ENCODE measurements at regions of chr12 and their contacts with region 1.

Region 1: DNA sequence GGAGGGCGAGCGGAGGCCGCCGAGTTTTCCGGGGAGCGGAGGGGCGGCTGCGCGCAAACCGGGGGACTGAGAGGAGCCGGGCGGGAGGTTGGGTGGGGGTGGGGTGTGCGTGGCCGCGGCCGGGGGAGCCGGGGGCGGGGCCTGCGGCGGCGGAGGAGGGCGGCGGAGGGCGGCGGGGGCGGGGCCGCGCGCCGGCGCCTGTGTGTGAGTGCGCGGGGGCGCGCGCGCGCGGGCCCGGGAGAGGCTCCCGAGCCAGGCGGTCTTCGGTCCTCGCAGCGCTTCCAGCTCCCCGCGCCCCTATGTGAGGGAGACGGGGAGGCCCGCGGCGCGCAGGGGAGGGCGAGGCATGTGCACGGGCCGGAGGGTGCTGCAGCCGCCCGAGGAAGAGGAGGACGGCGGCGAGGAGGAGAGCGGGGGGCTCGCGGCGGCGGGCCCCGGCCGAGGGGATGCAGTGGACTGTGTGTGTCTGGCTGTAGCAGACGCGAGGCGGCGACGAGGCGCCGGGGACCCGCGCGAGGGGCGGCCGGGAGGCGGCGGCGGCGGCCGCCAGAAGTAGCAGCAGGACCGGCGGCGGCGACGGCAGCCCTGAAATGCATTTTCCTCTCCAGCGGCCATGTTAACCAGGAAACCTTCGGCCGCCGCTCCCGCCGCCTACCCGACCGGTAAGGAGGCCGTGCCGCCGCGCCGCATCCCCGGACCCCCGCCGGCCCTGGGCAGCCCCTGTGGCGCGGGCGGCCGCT is at the start of gene DYRK2:
- DNase-seq: peak; percentile 88
- H3K4me3 Mint-ChIP-seq: peak within 1 kb of the TSS; percentile 84
- H3K27ac Mint-ChIP-seq: peak within 1 kb of the TSS; percentile 93
- H3K4me1 Mint-ChIP-seq: peaks cover 30% of the 10 kb centered on the region
- H3K27me3 Mint-ChIP-seq: no peaks in the 10 kb centered on the region
- CTCF ChIP-seq: no peak
- total RNA-seq, gene DYRK2: 62.3 and 74.6 TPM in 2 replicates

Region 2: GRCh38 chr12:67515679-67516340 is 132.9 kb before region 1 on chr12:
- CTCF ChIA-PET with region 1: interaction called, 3 read pairs
- intact Hi-C with region 1: loop called (anchors 5 kb)
- DNase-seq: peak; percentile 64
- H3K4me3 Mint-ChIP-seq: no peak overlapping the region
- H3K27ac Mint-ChIP-seq: peak overlapping the region; percentile 64
- H3K4me1 Mint-ChIP-seq: peaks cover 53% of the 10 kb centered on the region
- H3K27me3 Mint-ChIP-seq: no peaks in the 10 kb centered on the region
- CTCF ChIP-seq: no peak

Region 3: DNA sequence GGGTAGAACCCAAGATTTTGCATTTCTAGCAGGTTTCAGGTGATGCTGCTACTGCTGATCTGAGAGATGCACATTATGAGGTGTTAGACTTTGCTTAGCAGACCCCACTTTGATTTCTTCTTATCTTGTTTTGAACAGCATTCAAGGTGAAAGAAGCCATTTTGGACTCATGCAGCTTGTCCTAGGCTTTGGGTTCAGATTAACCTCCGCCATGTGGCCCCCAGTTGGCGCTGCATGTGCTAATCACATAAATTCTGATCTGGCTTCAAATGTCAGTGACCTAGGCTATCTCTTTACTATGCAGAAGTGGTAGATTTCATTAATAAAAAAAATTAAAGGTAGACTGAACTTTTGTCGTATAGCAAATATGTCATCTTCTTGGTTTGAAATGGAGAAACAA is 89.9 kb before region 1 on chr12:
- CTCF ChIA-PET with region 1: no interaction called
- intact Hi-C with region 1: loop called (anchors 5 kb)
- DNase-seq: no peak
- H3K4me3 Mint-ChIP-seq: no peak overlapping the region
- H3K27ac Mint-ChIP-seq: no peak overlapping the region
- H3K4me1 Mint-ChIP-seq: peaks cover 24% of the 10 kb centered on the region
- H3K27me3 Mint-ChIP-seq: no peaks in the 10 kb centered on the region
- CTCF ChIP-seq: no peak

Region 4: DNA sequence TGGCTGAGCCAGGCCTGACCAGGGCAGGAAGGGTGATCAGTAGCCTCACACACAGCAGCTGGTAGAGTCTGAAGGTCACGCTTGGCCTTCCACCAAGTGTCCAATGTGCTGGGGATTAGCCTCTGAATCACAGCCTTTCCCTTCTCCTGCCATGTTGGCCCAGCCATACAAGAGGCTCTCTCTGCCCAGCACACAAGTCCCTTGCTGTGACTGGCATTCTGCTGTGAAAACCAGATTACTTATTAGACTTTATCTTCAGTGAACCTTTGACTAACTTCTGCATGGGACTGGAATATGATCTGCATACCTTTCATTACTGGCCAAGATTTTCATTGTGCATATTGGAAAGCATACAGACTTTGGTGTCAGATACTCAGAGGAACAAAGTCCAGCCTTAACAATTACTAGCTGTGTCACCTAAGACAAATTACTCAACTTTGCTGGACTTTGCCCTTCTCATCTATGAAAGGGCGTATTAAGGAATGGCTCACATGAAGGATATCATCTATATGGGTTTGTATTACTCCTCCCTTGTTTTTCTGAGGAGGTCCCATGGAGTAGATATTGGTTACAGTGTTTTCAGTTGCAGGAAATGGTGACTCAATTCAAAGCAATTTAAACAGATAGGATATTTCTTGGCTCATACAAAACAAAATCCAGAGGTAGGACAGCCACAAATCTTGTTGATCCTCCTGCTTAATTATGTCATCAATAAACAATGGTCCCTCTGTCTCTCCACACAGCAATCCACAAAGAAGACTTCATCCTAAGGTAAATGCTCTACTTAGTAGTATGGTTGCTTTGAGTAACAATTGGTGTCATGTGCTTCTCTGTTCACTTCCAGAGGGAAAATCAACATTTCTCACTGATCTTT is 99.4 kb after region 1 on chr12:
- CTCF ChIA-PET with region 1: no interaction called
- intact Hi-C with region 1: loop called (anchors 2 kb)
- DNase-seq: peak; percentile 67
- H3K4me3 Mint-ChIP-seq: peak overlapping the region; percentile 53
- H3K27ac Mint-ChIP-seq: peak overlapping the region; percentile 90
- H3K4me1 Mint-ChIP-seq: peaks cover 72% of the 10 kb centered on the region
- H3K27me3 Mint-ChIP-seq: no peaks in the 10 kb centered on the region
- CTCF ChIP-seq: no peak

Region 5: DNA sequence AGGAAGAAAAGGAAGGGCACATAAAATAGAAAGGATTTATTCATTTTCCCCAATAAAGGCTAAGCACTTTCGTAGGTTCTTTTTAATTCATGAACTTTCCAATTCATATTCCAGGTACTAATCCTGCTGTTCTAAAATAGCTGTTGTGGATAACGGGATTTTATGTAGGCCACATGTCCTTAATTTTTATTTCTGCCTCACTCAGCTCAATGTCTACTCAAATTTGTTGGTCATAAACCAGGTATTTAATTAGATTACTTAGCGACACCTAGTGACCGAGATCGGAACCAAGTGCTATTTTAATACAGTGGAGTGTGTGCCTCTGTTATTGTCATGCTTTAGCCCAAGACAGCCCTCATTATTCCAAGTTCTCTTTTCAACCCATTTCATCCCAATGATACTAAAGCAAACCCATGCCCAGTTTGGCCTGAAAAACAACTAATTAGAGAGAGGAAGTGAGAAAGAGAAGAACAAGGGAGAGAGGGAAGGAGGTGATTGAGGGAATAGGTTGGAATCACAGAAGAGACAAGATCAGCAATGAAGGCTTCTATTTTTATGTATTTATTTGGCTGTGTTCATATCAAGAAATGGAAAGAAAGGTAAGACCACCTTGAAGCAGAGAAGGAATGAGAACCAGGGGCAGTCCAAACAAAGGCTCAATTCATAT is 294.7 kb after region 1 on chr12:
- CTCF ChIA-PET with region 1: interaction called, 10 read pairs
- intact Hi-C with region 1: loop called (anchors 2 kb)
- DNase-seq: peak; percentile 72
- H3K4me3 Mint-ChIP-seq: no peak overlapping the region
- H3K27ac Mint-ChIP-seq: peak overlapping the region; percentile 10
- H3K4me1 Mint-ChIP-seq: peaks cover 39% of the 10 kb centered on the region
- H3K27me3 Mint-ChIP-seq: no peaks in the 10 kb centered on the region
- CTCF ChIP-seq: peak; percentile 35